PC-3 (cell line): ENCODE measurements at regions of chr6 and their contacts with region 1.

Region 1: DNA sequence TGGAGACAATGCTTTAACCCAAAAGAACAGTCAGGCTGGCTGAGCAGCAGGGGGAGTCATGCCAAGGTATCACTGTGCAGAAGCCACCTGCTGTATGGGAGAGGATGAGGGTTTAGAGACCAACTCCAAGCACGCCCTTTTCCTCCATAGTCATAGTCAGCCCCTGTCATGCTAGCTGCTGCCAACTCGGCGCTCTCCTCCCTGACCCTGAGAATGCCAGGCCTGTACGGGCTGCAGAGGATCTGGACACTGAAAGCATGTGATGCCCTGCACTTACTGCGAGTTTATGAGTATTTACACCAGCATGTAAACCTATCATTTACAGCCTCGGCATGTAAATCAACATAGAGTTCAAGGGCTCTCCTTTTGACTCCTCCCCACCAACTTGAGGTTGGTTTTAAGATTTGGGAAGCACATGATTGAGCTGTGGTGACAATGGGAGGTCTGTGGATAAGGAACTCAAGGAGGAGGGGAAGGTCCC is 11.7 kb upstream of the SCUBE3 start:
- DNase-seq: peak; percentile 29
- ATAC-seq: peak; percentile 42
- H3K4me3 ChIP-seq: no peak overlapping the region
- H3K27ac ChIP-seq: peak overlapping the region; percentile 71
- H3K4me1 ChIP-seq: peaks cover 47% of the 10 kb centered on the region
- H3K27me3 ChIP-seq: no peaks in the 10 kb centered on the region
- CTCF ChIP-seq: peak; percentile 36; the same call in 1 of the 2 replicates

Region 2: GRCh38 chr6:34644716-34645115 is 557.4 kb before region 1 on chr6:
- CTCF ChIA-PET with region 1: no interaction called
- POLR2A ChIA-PET with region 1: interaction called, 24 read pairs
- intact Hi-C with region 1: no loop called
- DNase-seq: no peak
- ATAC-seq: no peak
- H3K4me3 ChIP-seq: no peak overlapping the region
- H3K27ac ChIP-seq: no peak overlapping the region
- H3K4me1 ChIP-seq: no peaks in the 10 kb centered on the region
- H3K27me3 ChIP-seq: no peaks in the 10 kb centered on the region
- CTCF ChIP-seq: no peak

Region 3: GRCh38 chr6:34986845-34987246 is 215.3 kb before region 1 on chr6:
- CTCF ChIA-PET with region 1: no interaction called
- POLR2A ChIA-PET with region 1: no interaction called
- intact Hi-C with region 1: loop called (anchors 10 kb)
- DNase-seq: peak; percentile 75
- ATAC-seq: peak; percentile 62
- H3K4me3 ChIP-seq: no peak overlapping the region
- H3K27ac ChIP-seq: no peak overlapping the region
- H3K4me1 ChIP-seq: peaks cover 6% of the 10 kb centered on the region; the same call in 1 of the 2 replicates
- H3K27me3 ChIP-seq: no peaks in the 10 kb centered on the region
- CTCF ChIP-seq: peak; percentile 93

Region 4: GRCh38 chr6:35081426-35081851 is 120.7 kb before region 1 on chr6:
- CTCF ChIA-PET with region 1: no interaction called
- POLR2A ChIA-PET with region 1: no interaction called
- intact Hi-C with region 1: no loop called
- DNase-seq: no peak
- ATAC-seq: no peak
- H3K4me3 ChIP-seq: no peak overlapping the region
- H3K27ac ChIP-seq: no peak overlapping the region
- H3K4me1 ChIP-seq: no peaks in the 10 kb centered on the region
- H3K27me3 ChIP-seq: no peaks in the 10 kb centered on the region
- CTCF ChIP-seq: no peak

Region 5: GRCh38 chr6:35146453-35146852 is 55.7 kb before region 1 on chr6:
- CTCF ChIA-PET with region 1: interaction called, 12 read pairs
- POLR2A ChIA-PET with region 1: no interaction called
- intact Hi-C with region 1: loop called (anchors 1 kb)
- DNase-seq: peak; percentile 81
- ATAC-seq: peak; percentile 75
- H3K4me3 ChIP-seq: no peak overlapping the region
- H3K27ac ChIP-seq: no peak overlapping the region
- H3K4me1 ChIP-seq: peaks cover 49% of the 10 kb centered on the region
- H3K27me3 ChIP-seq: no peaks in the 10 kb centered on the region
- CTCF ChIP-seq: peak; percentile 93

Region 6: GRCh38 chr6:35165630-35166071 is 36.5 kb before region 1 on chr6:
- CTCF ChIA-PET with region 1: interaction called, 3 read pairs
- POLR2A ChIA-PET with region 1: no interaction called
- intact Hi-C with region 1: loop called (anchors 5 kb)
- DNase-seq: peak; percentile 82
- ATAC-seq: peak; percentile 87
- H3K4me3 ChIP-seq: no peak overlapping the region
- H3K27ac ChIP-seq: peak overlapping the region; percentile 92
- H3K4me1 ChIP-seq: peaks cover 26% of the 10 kb centered on the region
- H3K27me3 ChIP-seq: no peaks in the 10 kb centered on the region
- CTCF ChIP-seq: no peak

Region 7: DNA sequence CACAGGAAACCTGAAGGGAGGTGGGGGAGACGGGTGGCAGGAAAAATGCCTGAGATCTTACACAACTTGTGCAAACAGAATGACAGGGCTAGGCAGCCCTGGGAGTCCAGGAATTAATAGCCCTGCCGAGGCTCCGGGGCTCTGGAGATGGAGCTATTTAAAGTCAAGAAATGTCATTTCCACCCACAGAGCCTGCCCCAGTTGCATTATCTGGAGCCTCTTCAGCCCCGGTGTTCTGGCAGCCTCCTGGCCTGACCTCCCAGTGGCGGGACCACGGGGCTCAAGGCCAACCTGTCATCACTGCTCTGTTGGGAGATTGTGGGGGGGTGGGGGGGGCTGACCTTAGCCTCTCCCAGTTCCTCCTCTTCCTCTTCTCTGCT is 16.8 kb before region 1 on chr6:
- CTCF ChIA-PET with region 1: no interaction called
- POLR2A ChIA-PET with region 1: interaction called, 5 read pairs
- intact Hi-C with region 1: loop called (anchors 2 kb)
- DNase-seq: peak; percentile 94
- ATAC-seq: peak; percentile 86
- H3K4me3 ChIP-seq: no peak overlapping the region
- H3K27ac ChIP-seq: peak overlapping the region; percentile 85
- H3K4me1 ChIP-seq: peaks cover 62% of the 10 kb centered on the region
- H3K27me3 ChIP-seq: no peaks in the 10 kb centered on the region
- CTCF ChIP-seq: no peak

Region 8: GRCh38 chr6:35240840-35241801 is 39.0 kb after region 1 on chr6:
- CTCF ChIA-PET with region 1: interaction called, 18 read pairs
- POLR2A ChIA-PET with region 1: no interaction called
- intact Hi-C with region 1: loop called (anchors 1 kb)
- DNase-seq: peak; percentile 88
- ATAC-seq: peak; percentile 98
- H3K4me3 ChIP-seq: no peak overlapping the region
- H3K27ac ChIP-seq: no peak overlapping the region
- H3K4me1 ChIP-seq: no peaks in the 10 kb centered on the region; the same call in 1 of the 2 replicates
- H3K27me3 ChIP-seq: no peaks in the 10 kb centered on the region
- CTCF ChIP-seq: peak; percentile 99

Region 9: DNA sequence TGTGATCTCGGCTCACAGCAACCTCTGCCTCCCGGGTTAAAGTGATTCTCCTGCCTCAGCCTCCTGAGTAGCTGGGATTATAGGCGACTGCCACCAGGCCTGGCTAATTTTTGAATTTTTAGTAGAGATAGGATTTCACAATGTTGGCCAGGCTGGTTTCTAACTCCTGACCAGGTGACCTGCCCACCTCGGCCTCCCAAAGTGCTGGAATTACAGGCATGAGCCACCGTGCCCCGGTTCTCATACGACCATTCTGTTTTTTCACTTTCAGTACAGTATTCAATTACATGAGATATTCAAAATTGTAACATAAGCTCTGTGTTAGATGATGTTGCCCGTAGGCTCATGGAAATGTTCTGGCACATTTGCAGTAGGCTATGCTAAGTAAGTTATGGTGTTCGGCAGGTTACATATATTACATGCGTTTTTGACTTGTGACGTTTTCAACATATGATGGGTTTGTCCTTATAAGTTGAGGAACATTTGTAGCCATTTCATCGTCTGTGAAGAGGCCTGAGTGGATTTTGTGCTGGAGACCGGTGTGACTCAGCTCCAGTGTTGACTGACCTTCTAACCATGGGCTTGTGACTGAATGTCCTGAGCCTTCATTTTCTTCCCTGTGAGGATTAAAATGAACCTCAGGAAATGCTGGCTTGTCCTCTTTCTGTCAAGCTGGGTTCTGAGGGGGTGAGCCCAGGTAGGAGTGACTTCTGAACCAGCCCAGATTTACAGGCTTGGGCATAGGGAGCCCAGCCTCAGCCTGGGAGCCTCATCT is 152.4 kb after region 1 on chr6:
- CTCF ChIA-PET with region 1: no interaction called
- POLR2A ChIA-PET with region 1: no interaction called
- intact Hi-C with region 1: no loop called
- DNase-seq: no peak
- ATAC-seq: no peak
- H3K4me3 ChIP-seq: no peak overlapping the region
- H3K27ac ChIP-seq: no peak overlapping the region
- H3K4me1 ChIP-seq: peaks cover 4% of the 10 kb centered on the region; the same call in 1 of the 2 replicates
- H3K27me3 ChIP-seq: no peaks in the 10 kb centered on the region
- CTCF ChIP-seq: no peak